PC-3 (cell line): ENCODE measurements at regions of chr20 and their contacts with region 1.

Region 1: GRCh38 chr20:57718490-57719271 is 8.9 kb upstream of the PMEPA1 start:
- DNase-seq: peak; percentile 100
- ATAC-seq: peak; percentile 88
- H3K4me3 ChIP-seq: peak overlapping the region; percentile 63
- H3K27ac ChIP-seq: peak overlapping the region; percentile 72
- H3K4me1 ChIP-seq: peaks cover 49% of the 10 kb centered on the region
- H3K27me3 ChIP-seq: no peaks in the 10 kb centered on the region
- CTCF ChIP-seq: no peak

Region 2: GRCh38 chr20:57526087-57526884 is 192.4 kb before region 1 on chr20:
- CTCF ChIA-PET with region 1: no interaction called
- POLR2A ChIA-PET with region 1: no interaction called
- intact Hi-C with region 1: no loop called
- DNase-seq: no peak
- ATAC-seq: no peak
- H3K4me3 ChIP-seq: no peak overlapping the region
- H3K27ac ChIP-seq: no peak overlapping the region
- H3K4me1 ChIP-seq: no peaks in the 10 kb centered on the region
- H3K27me3 ChIP-seq: no peaks in the 10 kb centered on the region
- CTCF ChIP-seq: peak; percentile 50; the same call in 1 of the 2 replicates

Region 3: DNA sequence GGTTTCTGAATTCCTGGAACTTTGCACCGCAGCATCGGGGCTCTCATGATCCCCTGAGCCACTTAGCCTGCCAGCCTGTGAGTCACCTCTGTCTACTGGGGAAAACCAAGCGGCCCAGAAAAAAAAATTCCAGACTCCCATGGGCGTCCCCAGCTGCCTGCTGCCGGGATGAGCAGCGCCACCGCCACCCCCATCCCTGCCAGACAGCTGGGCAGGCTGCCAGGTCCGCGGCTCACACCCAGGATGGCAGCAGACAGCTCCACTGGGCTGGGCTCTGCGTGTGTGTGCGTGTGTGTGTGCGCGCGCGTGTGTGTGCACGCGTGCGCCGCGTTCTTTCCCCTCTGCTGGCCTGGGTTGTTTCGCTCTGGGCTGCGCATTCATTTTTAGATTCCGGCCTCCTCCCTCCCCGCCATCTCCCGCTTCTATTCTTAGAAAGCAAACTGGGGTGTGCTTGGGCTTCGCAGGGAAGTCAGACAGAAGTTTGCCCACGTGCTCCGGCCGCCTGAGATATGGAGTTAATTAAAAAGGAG is 30.0 kb after region 1 on chr20:
- CTCF ChIA-PET with region 1: no interaction called
- POLR2A ChIA-PET with region 1: no interaction called
- intact Hi-C with region 1: loop called (anchors 1 kb)
- DNase-seq: peak; percentile 97
- ATAC-seq: peak; percentile 88
- H3K4me3 ChIP-seq: peak overlapping the region; percentile 58
- H3K27ac ChIP-seq: peak overlapping the region; percentile 43
- H3K4me1 ChIP-seq: peaks cover 23% of the 10 kb centered on the region
- H3K27me3 ChIP-seq: no peaks in the 10 kb centered on the region
- CTCF ChIP-seq: peak; percentile 20; the same call in 1 of the 2 replicates

Region 4: DNA sequence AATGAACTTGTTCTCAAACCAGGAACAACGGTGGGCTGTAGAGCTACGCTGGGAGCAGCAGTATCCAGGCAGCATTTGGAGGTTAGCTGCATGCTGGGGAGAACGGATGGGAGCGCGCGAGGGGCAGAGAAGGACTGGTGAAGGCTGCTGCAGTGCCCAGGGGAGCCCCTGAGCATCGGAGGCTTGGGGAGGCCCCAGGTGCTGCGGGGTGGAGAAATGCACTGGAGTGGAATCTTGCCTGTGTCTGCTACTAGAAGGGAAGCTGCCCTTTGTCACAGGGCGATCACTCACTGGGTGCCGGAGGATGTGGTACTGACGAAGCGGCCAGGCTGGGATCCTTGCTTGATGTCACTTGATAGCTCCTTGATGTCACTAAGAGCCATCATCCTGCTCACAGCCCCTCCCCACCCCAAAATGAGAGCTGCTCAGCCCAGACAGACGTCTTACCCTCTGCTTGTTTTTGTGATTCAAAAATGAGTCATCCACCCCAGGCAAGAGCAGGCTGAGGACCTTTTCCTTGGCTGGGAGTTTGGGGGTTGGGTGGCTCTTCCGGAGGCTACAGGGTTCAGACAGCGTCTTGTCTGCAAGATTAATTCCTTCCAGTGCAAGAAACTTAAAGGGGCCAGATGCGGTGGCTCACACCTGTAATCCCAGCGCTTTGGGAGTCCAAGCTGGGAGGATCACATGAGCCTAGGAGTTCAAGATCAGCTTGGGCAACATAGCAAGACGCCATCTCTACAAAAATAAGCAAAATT is 53.8 kb after region 1 on chr20:
- CTCF ChIA-PET with region 1: interaction called, 5 read pairs
- POLR2A ChIA-PET with region 1: no interaction called
- intact Hi-C with region 1: loop called (anchors 1 kb)
- DNase-seq: peak; percentile 99
- ATAC-seq: peak; percentile 99
- H3K4me3 ChIP-seq: no peak overlapping the region
- H3K27ac ChIP-seq: peak overlapping the region; percentile 88
- H3K4me1 ChIP-seq: peaks cover 27% of the 10 kb centered on the region
- H3K27me3 ChIP-seq: no peaks in the 10 kb centered on the region
- CTCF ChIP-seq: no peak

Region 5: GRCh38 chr20:57838670-57839151 is 120.0 kb after region 1 on chr20:
- CTCF ChIA-PET with region 1: no interaction called
- POLR2A ChIA-PET with region 1: no interaction called
- intact Hi-C with region 1: no loop called
- DNase-seq: no peak
- ATAC-seq: no peak
- H3K4me3 ChIP-seq: no peak overlapping the region
- H3K27ac ChIP-seq: no peak overlapping the region
- H3K4me1 ChIP-seq: no peaks in the 10 kb centered on the region
- H3K27me3 ChIP-seq: no peaks in the 10 kb centered on the region
- CTCF ChIP-seq: no peak

Region 6: GRCh38 chr20:57947421-57948179 is 228.9 kb after region 1 on chr20:
- CTCF ChIA-PET with region 1: no interaction called
- POLR2A ChIA-PET with region 1: no interaction called
- intact Hi-C with region 1: no loop called
- DNase-seq: no peak
- ATAC-seq: no peak
- H3K4me3 ChIP-seq: no peak overlapping the region
- H3K27ac ChIP-seq: no peak overlapping the region
- H3K4me1 ChIP-seq: no peaks in the 10 kb centered on the region
- H3K27me3 ChIP-seq: no peaks in the 10 kb centered on the region
- CTCF ChIP-seq: no peak